ENCODE measurements at regions of chr2 and their contacts with region 1.

Region 1: DNA sequence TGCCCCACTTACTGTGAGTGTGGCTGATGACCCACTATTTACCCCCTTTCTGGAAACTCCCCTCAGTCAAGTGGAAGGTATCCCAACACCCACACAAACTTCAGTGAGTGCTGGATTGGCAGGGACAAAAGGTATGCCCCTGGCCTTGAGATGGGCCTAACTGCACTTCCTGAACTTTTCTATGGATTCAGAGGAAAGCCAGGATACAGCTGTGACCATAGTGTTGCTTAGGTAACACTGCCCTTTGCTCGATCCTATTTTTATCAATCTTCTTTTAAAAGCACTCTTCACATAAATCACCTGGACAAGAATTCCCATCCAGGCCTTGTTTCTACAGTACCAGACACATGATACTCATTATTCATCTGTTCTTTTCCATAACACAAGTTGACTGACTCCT is 671.5 kb upstream of the SLC8A1 start:
- DNase-seq: no peak
- H3K4me3 ChIP-seq: no peak overlapping the region
- H3K27ac ChIP-seq: no peak overlapping the region
- H3K4me1 ChIP-seq: no peaks in the 10 kb centered on the region
- H3K27me3 ChIP-seq: no peaks in the 10 kb centered on the region
- CTCF ChIP-seq: no peak
- POLR2A ChIP-seq: no peak

Region 2: DNA sequence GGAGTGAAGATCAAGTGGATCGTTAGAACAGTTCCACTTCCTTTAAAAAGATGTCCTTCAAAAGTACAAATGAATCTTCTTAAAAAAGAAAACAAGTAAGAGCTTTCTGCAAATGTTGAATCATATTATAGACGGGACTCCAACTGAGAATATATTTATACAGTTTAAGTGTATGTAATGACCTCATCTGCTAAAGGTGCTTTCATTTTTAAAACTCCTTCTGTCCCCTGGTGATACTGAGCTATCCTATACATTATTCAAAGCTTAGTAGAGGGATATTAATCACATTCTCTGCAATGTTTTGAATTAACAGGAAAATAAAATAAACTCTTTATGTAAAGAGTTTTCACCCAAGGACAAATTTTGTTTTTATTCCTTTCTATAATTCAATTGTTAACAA is 250.8 kb before region 1 on chr2:
- CTCF ChIA-PET with region 1: no interaction called
- POLR2A ChIA-PET with region 1: no interaction called
- dilution Hi-C with region 1: no loop called
- intact Hi-C with region 1: no loop called
- DNase-seq: no peak
- H3K4me3 ChIP-seq: no peak overlapping the region
- H3K27ac ChIP-seq: no peak overlapping the region
- H3K4me1 ChIP-seq: no peaks in the 10 kb centered on the region
- H3K27me3 ChIP-seq: no peaks in the 10 kb centered on the region
- CTCF ChIP-seq: no peak
- POLR2A ChIP-seq: no peak

Region 3: DNA sequence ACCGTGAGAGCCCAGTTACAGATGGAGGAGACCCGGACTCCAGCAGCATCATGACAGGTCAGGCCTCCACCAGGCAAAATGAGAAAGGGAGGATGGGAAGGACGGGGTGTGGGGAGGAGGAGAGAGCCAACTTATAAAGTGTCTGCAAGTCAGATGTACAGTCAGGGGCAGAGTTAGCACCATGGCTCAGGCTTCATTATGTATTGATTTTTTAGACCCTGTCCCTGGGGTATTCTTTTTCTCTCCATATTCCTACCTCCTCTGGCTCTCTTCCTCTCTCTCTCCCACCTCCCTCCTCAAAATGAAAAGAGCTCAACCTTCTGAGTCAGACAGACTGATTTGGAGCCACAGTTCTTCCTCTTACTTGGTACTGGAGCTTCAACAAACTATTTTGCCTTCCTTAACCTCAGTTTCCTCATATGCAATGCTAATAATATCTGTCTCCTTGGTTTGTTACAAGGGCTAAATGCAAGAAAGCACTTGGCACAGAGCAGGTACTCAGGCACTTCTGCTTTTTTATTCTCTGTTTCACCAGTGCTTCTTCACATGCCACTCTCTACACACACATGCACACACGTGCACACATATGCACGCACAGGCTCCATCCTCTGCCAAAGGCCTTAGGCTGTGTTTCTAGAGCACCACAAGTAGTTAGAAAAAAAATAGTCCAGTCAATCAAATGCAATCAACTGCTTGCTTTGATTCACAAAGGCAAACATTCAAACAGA is 832.1 kb after region 1 on chr2:
- CTCF ChIA-PET with region 1: no interaction called
- POLR2A ChIA-PET with region 1: no interaction called
- dilution Hi-C with region 1: no loop called
- intact Hi-C with region 1: no loop called
- DNase-seq: no peak
- H3K4me3 ChIP-seq: no peak overlapping the region
- H3K27ac ChIP-seq: no peak overlapping the region
- H3K4me1 ChIP-seq: peaks cover 9% of the 10 kb centered on the region
- H3K27me3 ChIP-seq: peaks cover 7% of the 10 kb centered on the region in 2 experiments
- CTCF ChIP-seq: no peak
- POLR2A ChIP-seq: no peak

Region 4: GRCh38 chr2:42267530-42267929 is 1144.2 kb after region 1 on chr2:
- CTCF ChIA-PET with region 1: no interaction called
- POLR2A ChIA-PET with region 1: no interaction called
- dilution Hi-C with region 1: no loop called
- intact Hi-C with region 1: loop called (anchors 5 kb)
- DNase-seq: no peak
- H3K4me3 ChIP-seq: no peak overlapping the region
- H3K27ac ChIP-seq: no peak overlapping the region
- H3K4me1 ChIP-seq: peaks cover 8% of the 10 kb centered on the region
- H3K27me3 ChIP-seq: no peaks in the 10 kb centered on the region
- CTCF ChIP-seq: no peak
- POLR2A ChIP-seq: no peak